Cardiac septum (tissue), 1 donor: ENCODE measurements at regions of chr4 and their contacts with region 1.

Region 1: DNA sequence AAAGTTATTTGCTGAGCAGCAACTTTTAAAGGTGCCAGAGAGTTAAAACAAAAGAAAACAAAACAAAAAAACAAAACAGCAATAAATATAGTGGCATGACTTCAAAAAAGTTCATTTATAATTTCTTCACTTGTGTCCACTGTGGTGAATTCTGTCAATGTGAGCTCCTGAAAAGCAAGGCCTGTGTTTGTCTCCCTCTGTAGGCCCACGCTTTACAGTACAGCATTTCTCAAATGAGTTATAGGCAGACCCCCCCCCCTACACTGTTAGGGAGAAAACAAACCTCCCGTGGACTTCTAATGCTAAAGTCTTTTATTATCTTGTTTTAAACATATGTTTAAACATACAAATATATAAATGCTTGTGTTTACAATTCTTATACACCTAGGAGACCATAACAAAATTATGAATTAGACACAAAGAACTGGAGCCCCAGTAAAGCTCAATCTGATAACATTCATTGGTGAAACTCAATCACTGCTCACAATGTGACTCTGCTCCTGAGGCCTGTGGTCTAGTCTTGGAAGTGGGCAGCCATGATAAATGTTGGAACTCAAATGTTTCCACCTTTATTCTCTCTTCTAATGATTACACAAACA is 47.0 kb upstream of the SCOC start:
- DNase-seq: no peak

Region 2: GRCh38 chr4:140012688-140013486 is 313.6 kb before region 1 on chr4:
- intact Hi-C with region 1: loop called (anchors 2 kb)
- DNase-seq: peak; percentile 78

Region 3: DNA sequence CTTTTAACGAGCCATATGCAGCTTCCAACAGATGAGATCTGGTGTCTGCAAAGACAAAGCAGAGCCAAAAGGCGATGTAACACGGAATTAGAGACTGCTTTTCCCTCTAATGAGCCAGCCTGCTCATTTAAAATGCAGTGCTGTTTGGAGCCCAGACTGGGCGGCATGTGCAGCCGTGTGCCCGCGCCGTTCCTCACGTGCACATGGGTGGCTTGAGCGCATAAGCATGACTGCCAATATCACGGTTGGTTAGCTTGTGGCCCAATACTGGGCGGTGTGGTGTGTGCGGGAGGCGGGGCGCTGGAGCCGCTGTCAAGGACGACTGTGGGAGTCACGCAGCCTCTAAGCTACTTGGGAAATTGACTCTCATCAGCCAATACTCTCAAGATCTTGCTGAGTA is 40.0 kb before region 1 on chr4:
- intact Hi-C with region 1: no loop called
- DNase-seq: no peak

Region 4: DNA sequence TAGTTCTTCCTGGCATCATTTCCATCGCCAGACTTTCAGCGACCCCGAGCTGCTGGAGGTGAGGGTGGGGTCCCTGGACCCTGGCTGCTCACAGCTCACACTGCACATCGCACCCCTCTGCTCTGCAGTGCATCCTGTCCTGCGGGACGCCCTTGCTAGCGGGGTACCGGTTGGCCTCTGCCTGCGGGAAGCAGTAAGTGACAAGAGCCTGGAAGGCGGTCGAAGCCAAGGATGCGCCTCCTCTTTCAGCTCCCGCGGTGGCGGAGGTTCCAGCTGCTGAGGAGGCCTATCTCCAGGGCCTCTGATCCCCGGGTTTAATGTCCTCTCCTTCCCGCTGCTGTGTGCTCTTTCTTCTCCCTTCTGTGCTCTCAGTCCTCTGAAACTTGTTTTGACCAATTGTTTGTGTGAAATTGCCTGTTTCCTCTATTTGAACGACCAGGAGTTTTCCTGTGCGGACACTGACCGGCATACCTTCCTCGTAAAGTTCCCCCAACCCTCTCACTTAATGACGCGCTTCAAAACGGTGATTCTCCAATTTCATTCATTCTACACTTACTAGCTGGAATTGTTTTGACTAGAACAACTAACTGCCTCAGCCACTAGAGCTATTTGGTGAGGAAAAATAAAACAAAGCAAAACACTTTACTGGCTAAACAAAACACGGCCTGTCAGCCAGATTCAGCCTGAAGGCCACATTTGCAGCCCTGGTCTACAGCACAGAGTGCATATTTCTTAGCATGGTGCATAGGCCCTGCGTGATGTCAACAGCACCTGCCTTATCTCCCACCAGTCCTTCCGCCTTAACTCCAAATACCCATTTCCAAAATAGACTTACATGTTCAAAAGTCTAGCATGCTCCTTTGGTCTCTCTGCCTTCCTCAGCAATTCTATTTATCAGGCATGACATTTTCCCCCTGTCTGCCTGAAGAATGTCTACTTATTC is 143.6 kb after region 1 on chr4:
- intact Hi-C with region 1: no loop called
- DNase-seq: no peak